RWPE1 (cell line): ENCODE measurements at regions of chr5 and their contacts with region 1.

Region 1: GRCh38 chr5:8577792-8578191 is 708.8 kb downstream of the MTRR start:
- DNase-seq: no peak
- H3K27ac ChIP-seq: no peak overlapping the region
- CTCF ChIP-seq: no peak

Region 2: GRCh38 chr5:8540317-8540716 is 37.5 kb before region 1 on chr5:
- CTCF ChIA-PET with region 1: interaction called, 10 read pairs
- POLR2A ChIA-PET with region 1: no interaction called
- DNase-seq: no peak
- H3K27ac ChIP-seq: no peak overlapping the region
- CTCF ChIP-seq: no peak

Region 3: GRCh38 chr5:8686707-8687106 is 108.9 kb after region 1 on chr5:
- CTCF ChIA-PET with region 1: no interaction called
- POLR2A ChIA-PET with region 1: no interaction called
- DNase-seq: no peak
- H3K27ac ChIP-seq: no peak overlapping the region
- CTCF ChIP-seq: no peak